ENCODE measurements at regions of chr9 and their contacts with region 1.

Region 1: DNA sequence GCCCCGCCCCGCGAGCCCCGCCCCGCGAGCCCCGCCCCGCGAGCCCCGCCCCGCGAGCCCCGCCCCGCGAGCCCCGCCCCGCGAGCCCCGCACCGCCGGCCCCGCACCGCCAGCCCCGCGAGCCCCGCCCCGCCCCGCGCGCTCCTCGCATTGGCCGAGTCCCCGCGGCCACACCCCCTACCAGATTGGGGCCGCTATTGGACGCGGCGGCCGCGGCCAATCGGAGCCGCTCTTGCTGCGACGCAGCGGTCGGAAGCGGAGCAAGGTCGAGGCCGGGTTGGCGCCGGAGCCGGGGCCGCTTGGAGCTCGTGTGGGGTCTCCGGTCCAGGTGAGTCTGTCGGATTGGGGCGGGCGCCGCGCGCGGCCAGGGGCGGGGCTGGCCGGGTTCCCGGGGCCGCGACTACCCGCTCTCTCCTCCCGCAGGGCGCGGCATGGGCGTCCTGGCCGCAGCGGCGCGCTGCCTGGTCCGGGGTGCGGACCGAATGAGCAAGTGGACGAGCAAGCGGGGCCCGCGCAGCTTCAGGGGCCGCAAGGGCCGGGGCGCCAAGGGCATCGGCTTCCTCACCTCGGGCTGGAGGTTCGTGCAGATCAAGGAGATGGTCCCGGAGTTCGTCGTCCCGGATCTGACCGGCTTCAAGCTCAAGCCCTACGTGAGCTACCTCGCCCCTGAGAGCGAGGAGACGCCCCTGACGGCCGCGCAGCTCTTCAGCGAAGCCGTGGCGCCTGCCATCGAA is at the start of gene MRPL41:
- DNase-seq: peak; percentile 71 to 97 (median 86)
- ATAC-seq: peak; percentile 80
- H3K4me3 ChIP-seq: peak within 1 kb of the TSS; percentile 67
- H3K4me3 Mint-ChIP-seq: peak within 1 kb of the TSS; percentile 91
- H3K27ac ChIP-seq: peak within 1 kb of the TSS; percentile 64 to 72
- H3K27ac Mint-ChIP-seq: peak within 1 kb of the TSS; percentile 82
- H3K4me1 ChIP-seq: peaks cover 18% of the 10 kb centered on the region
- H3K4me1 Mint-ChIP-seq: peaks cover 16% of the 10 kb centered on the region
- H3K27me3 ChIP-seq: no peaks in the 10 kb centered on the region
- H3K27me3 Mint-ChIP-seq: no peaks in the 10 kb centered on the region
- CTCF ChIP-seq: no peak
- total RNA-seq, gene MRPL41: 49.3 to 52.5 TPM

Region 2: GRCh38 chr9:137453643-137454081 is 98.2 kb before region 1 on chr9:
- CTCF ChIA-PET with region 1: no interaction called
- POLR2A ChIA-PET with region 1: no interaction called
- intact Hi-C with region 1: loop called in 1 of 2 experiments (anchors 2 kb)
- DNase-seq: peak; percentile 52 to 80 (median 59)
- ATAC-seq: peak; percentile 70
- H3K4me3 ChIP-seq: peak overlapping the region; percentile 25
- H3K4me3 Mint-ChIP-seq: peak overlapping the region; percentile 67
- H3K27ac ChIP-seq: no peak overlapping the region
- H3K27ac Mint-ChIP-seq: peak overlapping the region; percentile 71
- H3K4me1 ChIP-seq: peaks cover 88% of the 10 kb centered on the region
- H3K4me1 Mint-ChIP-seq: peaks cover 39% of the 10 kb centered on the region
- H3K27me3 ChIP-seq: no peaks in the 10 kb centered on the region
- H3K27me3 Mint-ChIP-seq: no peaks in the 10 kb centered on the region
- CTCF ChIP-seq: no peak

Region 3: GRCh38 chr9:137459147-137459600 is 92.6 kb before region 1 on chr9 and contains the start of gene NSMF:
- CTCF ChIA-PET with region 1: no interaction called
- POLR2A ChIA-PET with region 1: interaction called, 3 read pairs
- intact Hi-C with region 1: loop called in 1 of 2 experiments (anchors 2 kb)
- DNase-seq: peak; percentile 88 to 98 (median 94)
- ATAC-seq: peak; percentile 67
- H3K4me3 ChIP-seq: peak within 1 kb of the TSS; percentile 57
- H3K4me3 Mint-ChIP-seq: peak within 1 kb of the TSS; percentile 77
- H3K27ac ChIP-seq: peak within 1 kb of the TSS; percentile 77 to 79
- H3K27ac Mint-ChIP-seq: peak within 1 kb of the TSS; percentile 95
- H3K4me1 ChIP-seq: peaks cover 86% of the 10 kb centered on the region
- H3K4me1 Mint-ChIP-seq: peaks cover 46% of the 10 kb centered on the region
- H3K27me3 ChIP-seq: no peaks in the 10 kb centered on the region
- H3K27me3 Mint-ChIP-seq: no peaks in the 10 kb centered on the region
- CTCF ChIP-seq: no peak
- total RNA-seq, gene NSMF: 104 to 109 TPM

Region 4: GRCh38 chr9:137590462-137591383 is 38.9 kb after region 1 on chr9 and contains the start of gene ZMYND19:
- CTCF ChIA-PET with region 1: no interaction called
- POLR2A ChIA-PET with region 1: interaction called, 6 read pairs
- intact Hi-C with region 1: loop called in 1 of 2 experiments (anchors 1 kb)
- DNase-seq: peak; percentile 79 to 97 (median 90)
- ATAC-seq: peak; percentile 97
- H3K4me3 ChIP-seq: peak within 1 kb of the TSS; percentile 61
- H3K4me3 Mint-ChIP-seq: peak within 1 kb of the TSS; percentile 98
- H3K27ac ChIP-seq: no peak within 1 kb of the TSS
- H3K27ac Mint-ChIP-seq: peak within 1 kb of the TSS; percentile 59
- H3K4me1 ChIP-seq: peaks cover 21% of the 10 kb centered on the region
- H3K4me1 Mint-ChIP-seq: peaks cover 17% of the 10 kb centered on the region
- H3K27me3 ChIP-seq: no peaks in the 10 kb centered on the region
- H3K27me3 Mint-ChIP-seq: no peaks in the 10 kb centered on the region
- CTCF ChIP-seq: no peak
- total RNA-seq, gene ZMYND19: 8.6 to 11.3 TPM

Measured in CD4-positive, alpha-beta T cell (primary cell).